Sciatic nerve (tissue), 2 donors: ENCODE measurements at regions of chr13 and their contacts with region 1.

Region 1: GRCh38 chr13:78978381-78978998 is 319.5 kb upstream of the OBI1 start:
- DNase-seq: no peak
- ATAC-seq: peak; percentile 55

Region 2: GRCh38 chr13:78137404-78138142 is 840.9 kb before region 1 on chr13:
- intact Hi-C with region 1: loop called (anchors 2 kb)
- DNase-seq: no peak
- ATAC-seq: peak; percentile 85

Region 3: GRCh38 chr13:80065996-80066395 is 1087.5 kb after region 1 on chr13:
- intact Hi-C with region 1: no loop called
- DNase-seq: no peak
- ATAC-seq: no peak